ENCODE measurements at regions of chr6 and their contacts with region 1.

Region 1: DNA sequence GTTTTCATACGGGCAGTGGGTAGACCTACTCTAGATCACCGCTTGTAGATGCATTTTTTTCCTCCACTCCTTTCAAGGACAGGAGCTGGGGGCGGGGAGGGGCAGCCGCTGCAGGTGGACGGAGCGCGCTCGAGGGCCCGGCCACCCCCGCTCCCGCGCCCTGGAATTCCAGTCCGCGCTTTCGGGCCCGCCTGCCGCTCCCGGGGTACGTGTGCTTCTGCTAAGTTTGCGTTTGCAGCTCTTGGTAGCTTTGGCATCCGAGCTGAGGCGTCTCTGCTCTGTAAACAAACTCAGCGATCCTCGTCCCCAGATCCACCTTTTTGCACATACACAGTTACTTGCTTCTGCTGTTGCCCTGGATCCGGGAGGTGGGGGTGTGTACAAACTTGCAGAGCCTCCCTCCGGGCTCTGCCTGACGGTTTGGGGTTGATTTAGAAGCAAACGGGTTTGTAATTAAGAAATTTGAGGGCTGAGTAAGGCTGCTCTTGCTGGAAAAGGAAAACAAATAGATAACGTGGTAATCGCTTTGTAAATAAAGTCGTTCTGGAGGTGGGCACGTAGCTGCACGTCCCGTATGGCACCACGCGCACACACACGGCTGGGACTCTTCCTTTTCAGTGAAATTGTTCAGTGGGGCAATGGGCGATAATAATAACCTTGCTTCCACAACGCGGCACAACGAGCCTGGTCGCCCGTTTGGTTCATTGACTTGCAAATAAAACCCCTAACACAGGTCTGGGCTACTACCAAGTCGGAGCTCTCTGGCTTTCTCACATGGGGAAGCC is 976 bp upstream of the CITED2 start:
- DNase-seq: peak; percentile 94
- H3K4me3 ChIP-seq: peak overlapping the region; percentile 62 to 76 (median 70)
- H3K27ac ChIP-seq: peak overlapping the region; percentile 92
- H3K4me1 ChIP-seq: peaks cover 43% of the 10 kb centered on the region
- H3K27me3 ChIP-seq: no peaks in the 10 kb centered on the region
- CTCF ChIP-seq: peak in 1 of 2 donors; percentile 24

Region 2: GRCh38 chr6:139278190-139278589 is 97.2 kb before region 1 on chr6:
- CTCF ChIA-PET with region 1: no interaction called
- dilution Hi-C with region 1: no loop called
- in situ Hi-C with region 1: no loop called
- intact Hi-C with region 1: no loop called
- DNase-seq: no peak
- H3K4me3 ChIP-seq: no peak overlapping the region
- H3K27ac ChIP-seq: no peak overlapping the region
- H3K4me1 ChIP-seq: no peaks in the 10 kb centered on the region
- H3K27me3 ChIP-seq: no peaks in the 10 kb centered on the region
- CTCF ChIP-seq: no peak

Region 3: GRCh38 chr6:139436200-139436997 is 61.0 kb after region 1 on chr6:
- CTCF ChIA-PET with region 1: no interaction called
- dilution Hi-C with region 1: no loop called
- in situ Hi-C with region 1: no loop called
- intact Hi-C with region 1: loop called (anchors 1 kb)
- DNase-seq: peak; percentile 74
- H3K4me3 ChIP-seq: no peak overlapping the region
- H3K27ac ChIP-seq: peak overlapping the region; percentile 66
- H3K4me1 ChIP-seq: peaks cover 13% of the 10 kb centered on the region
- H3K27me3 ChIP-seq: no peaks in the 10 kb centered on the region
- CTCF ChIP-seq: no peak

Region 4: GRCh38 chr6:139519571-139520031 is 144.2 kb after region 1 on chr6:
- CTCF ChIA-PET with region 1: no interaction called
- dilution Hi-C with region 1: no loop called
- in situ Hi-C with region 1: no loop called
- intact Hi-C with region 1: loop called (anchors 1 kb)
- DNase-seq: no peak
- H3K4me3 ChIP-seq: no peak overlapping the region
- H3K27ac ChIP-seq: peak overlapping the region; percentile 44
- H3K4me1 ChIP-seq: peaks cover 27% of the 10 kb centered on the region
- H3K27me3 ChIP-seq: no peaks in the 10 kb centered on the region
- CTCF ChIP-seq: no peak

Region 5: DNA sequence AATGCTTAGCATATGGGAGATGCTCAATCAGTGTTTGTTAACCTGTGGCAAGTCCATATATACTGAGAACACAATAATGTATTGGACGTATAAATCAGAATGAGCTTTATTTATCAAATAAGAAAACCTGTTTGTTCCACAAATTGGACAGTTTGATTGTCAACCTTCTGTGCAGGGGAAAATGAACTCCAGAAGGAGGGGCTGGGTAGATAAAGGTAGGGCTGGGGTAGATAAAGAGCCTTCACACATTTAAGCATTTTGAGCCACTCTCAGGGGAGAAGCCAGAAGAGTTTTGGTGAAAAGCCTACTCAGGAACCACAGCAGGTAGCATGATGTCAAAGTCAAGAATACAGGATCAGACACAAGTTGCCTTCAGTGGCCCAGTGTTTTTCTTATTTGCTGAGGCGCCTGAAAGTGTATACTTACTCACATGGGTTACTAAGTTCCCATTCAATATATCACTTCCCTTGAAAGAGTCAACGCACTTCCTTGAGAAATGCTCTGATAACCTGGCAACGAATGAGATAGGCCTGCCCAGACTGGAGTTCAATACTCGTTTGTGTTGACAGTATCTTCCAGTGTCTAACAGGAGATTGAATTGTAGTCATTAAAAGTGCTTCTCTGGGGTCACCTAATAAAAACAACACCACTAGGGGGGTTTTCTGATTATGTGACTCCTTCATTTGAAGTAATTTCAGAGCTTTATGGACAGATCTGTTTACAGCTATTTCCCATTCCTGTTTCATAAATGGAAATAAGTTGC is 262.9 kb after region 1 on chr6:
- CTCF ChIA-PET with region 1: no interaction called
- dilution Hi-C with region 1: no loop called
- in situ Hi-C with region 1: no loop called
- intact Hi-C with region 1: loop called (anchors 10 kb)
- DNase-seq: no peak
- H3K4me3 ChIP-seq: no peak overlapping the region
- H3K27ac ChIP-seq: no peak overlapping the region
- H3K4me1 ChIP-seq: peaks cover 17% of the 10 kb centered on the region
- H3K27me3 ChIP-seq: no peaks in the 10 kb centered on the region
- CTCF ChIP-seq: no peak

Region 6: DNA sequence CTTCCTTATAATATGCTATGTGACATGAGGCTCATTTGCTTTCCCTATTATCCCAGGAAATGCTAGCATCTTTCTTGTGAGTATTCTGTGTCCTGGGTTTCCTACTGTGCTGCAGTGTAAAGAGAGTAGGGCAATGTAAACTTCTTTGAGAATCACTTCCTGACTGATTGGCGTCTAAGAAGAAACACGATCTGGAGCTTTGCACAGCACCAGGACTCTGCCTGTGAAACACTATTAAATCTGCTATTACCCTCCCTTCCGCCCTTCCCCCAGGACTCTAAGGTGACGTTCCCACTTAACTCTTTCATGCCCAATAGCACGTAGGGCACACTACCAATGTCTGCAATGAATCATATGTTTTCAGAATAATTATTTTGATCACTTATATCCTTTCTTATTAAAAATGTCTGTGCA is 606.4 kb after region 1 on chr6:
- CTCF ChIA-PET with region 1: no interaction called
- dilution Hi-C with region 1: no loop called
- in situ Hi-C with region 1: no loop called
- intact Hi-C with region 1: loop called (anchors 5 kb)
- DNase-seq: no peak
- H3K4me3 ChIP-seq: no peak overlapping the region
- H3K27ac ChIP-seq: peak overlapping the region; percentile 3
- H3K4me1 ChIP-seq: peaks cover 32% of the 10 kb centered on the region
- H3K27me3 ChIP-seq: no peaks in the 10 kb centered on the region
- CTCF ChIP-seq: no peak

Region 7: DNA sequence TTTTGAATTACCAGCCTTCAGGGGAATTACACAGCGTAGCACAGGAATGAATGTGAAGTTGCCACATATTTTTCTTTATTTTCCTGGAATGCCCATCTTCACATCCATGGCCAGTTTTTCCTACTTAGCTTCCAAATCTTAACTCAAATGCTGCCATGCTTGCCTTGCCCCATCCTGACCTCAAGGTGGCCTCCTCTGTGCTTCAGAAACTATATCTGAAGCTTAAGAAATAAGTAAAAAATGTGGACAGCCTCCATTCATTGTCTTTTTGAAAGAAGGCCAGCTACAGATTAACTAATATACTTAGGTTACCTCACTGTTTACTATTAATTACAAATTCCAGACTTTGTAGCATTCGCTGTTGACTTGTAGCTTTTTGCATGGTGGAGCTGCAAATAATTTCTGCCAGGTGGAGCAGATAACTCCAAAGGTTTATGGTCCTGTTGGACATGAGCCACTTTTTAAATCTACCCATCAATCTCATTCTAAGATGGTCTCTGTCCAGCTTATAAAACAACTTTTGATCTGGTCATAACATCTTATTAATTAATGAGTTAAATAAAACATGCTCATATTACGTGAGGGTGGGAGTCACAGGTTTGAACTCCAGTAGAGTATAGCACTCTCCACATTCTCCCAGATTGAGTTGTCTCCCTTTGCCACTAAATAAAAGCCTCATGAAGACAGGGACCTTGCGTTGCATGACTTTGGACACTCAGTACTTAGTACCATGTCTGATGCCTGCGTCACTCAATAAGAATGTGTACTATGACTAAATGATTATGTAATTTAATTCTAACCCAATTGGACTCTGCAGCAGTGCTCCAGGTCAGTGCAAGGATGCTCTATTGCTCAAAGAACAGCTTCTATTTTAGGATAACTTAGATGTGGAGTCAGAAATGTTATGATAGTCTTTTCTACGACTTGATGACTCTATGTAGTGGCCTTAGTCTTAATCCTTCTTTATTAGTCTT is 677.6 kb after region 1 on chr6:
- CTCF ChIA-PET with region 1: no interaction called
- dilution Hi-C with region 1: loop called (anchors 5 kb)
- in situ Hi-C with region 1: no loop called
- intact Hi-C with region 1: loop called (anchors 1 kb)
- DNase-seq: peak; percentile 8
- H3K4me3 ChIP-seq: no peak overlapping the region
- H3K27ac ChIP-seq: peak overlapping the region; percentile 93
- H3K4me1 ChIP-seq: peaks cover 32% of the 10 kb centered on the region
- H3K27me3 ChIP-seq: no peaks in the 10 kb centered on the region
- CTCF ChIP-seq: peak; percentile 50 to 57

Region 8: GRCh38 chr6:140441256-140441655 is 1065.8 kb after region 1 on chr6:
- CTCF ChIA-PET with region 1: no interaction called
- dilution Hi-C with region 1: no loop called
- in situ Hi-C with region 1: loop called (anchors 10 to 25 kb)
- intact Hi-C with region 1: loop called (anchors 1 kb)
- DNase-seq: peak; percentile 28
- H3K4me3 ChIP-seq: no peak overlapping the region
- H3K27ac ChIP-seq: no peak overlapping the region
- H3K4me1 ChIP-seq: peaks cover 18% of the 10 kb centered on the region
- H3K27me3 ChIP-seq: no peaks in the 10 kb centered on the region
- CTCF ChIP-seq: peak; percentile 43 to 78

Measured in mammary epithelial cell (primary cell).